Activated T-helper 2 cell treated with anti-CD3 and anti-CD28 coated beads, Interferon-gamma antibody, Interleukin-2, Interleukin-4, amounts not matched to agents 10 μg/mL and 5 μg/mL and 100 μg/mL, durations not matched to agents 14 hours and 24 hours and 36 hours (primary cell): ENCODE measurements at regions of chr7 and their contacts with region 1.

Region 1: DNA sequence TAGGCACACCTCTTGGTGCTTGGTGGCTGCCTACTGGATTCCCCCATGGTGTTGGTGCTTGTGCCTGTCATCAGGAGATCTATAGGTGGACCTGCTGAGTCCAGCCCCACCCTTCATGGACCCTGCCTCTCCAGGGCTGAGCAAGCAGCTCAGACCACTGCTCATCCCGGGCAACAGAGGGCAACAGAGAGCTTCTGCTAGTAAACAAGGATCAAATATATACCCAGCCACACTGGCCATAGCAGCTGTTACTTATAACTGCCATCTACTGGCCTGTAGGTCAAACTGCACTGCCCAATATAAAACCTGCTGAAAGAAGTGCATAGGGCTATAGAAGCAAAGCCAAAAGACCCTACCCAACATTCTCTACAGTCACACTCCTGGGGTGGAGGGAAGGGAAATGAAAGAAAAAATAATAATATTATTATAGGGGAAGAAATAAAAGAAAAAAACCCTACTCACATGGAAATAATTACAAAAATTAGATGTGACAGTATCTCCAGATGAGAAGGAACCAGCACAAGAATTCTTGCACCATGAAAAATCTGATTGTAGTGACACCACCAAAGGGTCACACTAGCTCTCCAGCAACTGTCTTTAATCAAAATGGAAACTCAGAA is 54.9 kb upstream of the ZNF800 start:
- DNase-seq: peak; percentile 53
- H3K4me3 Mint-ChIP-seq: no peak overlapping the region
- H3K27ac Mint-ChIP-seq: no peak overlapping the region
- H3K4me1 Mint-ChIP-seq: peaks cover 7% of the 10 kb centered on the region
- H3K27me3 Mint-ChIP-seq: peaks cover 41% of the 10 kb centered on the region

Region 2: DNA sequence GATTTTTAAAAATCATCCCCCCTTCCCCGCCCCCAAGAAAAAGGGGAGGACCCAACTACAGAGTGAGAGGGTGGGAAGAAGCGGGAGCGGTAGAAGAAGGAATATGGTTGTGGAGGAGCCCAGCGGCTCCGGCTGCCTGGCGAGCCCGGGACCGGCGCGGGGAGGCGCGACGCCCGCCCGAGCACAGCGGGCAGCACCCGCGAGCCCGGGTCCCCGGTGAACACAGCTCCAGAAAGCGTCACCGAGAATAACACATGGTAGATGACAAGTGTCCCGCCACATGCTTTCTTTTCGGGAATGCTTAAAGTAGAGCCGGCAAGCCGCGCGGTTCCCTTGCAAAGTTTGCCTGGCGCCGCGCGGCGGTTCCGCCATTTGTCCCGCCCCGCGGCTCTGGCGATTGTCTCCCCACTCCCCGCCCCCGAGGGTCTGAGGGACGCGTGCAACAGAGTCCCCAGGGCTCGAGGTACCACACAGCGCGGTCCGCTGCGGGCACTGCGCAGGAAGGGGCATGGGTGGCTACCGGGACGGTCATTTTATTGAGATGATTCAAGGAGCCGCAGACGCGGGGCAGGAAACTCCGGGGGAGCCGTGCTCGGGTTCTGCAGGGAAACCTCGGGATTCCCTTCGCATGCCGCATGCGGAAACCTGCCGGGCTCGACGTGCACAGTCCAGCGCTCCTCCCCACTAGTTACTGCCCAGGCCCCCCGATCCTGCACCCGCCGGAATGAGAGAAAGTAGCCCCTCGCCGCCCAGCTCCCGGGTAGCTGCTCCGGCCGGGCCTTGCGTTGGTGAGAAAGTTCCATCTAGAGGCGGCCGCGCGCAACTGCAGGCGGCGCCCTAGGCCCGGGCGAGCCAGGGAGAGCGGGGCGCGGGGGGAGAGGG is 193.9 kb before region 1 on chr7:
- intact Hi-C with region 1: loop called (anchors 1 kb)
- DNase-seq: peak; percentile 41
- H3K4me3 Mint-ChIP-seq: peak overlapping the region; percentile 80
- H3K27ac Mint-ChIP-seq: no peak overlapping the region
- H3K4me1 Mint-ChIP-seq: peaks cover 9% of the 10 kb centered on the region
- H3K27me3 Mint-ChIP-seq: peaks cover 70% of the 10 kb centered on the region